ENCODE measurements at regions of chr6 and their contacts with region 1.

Region 1: DNA sequence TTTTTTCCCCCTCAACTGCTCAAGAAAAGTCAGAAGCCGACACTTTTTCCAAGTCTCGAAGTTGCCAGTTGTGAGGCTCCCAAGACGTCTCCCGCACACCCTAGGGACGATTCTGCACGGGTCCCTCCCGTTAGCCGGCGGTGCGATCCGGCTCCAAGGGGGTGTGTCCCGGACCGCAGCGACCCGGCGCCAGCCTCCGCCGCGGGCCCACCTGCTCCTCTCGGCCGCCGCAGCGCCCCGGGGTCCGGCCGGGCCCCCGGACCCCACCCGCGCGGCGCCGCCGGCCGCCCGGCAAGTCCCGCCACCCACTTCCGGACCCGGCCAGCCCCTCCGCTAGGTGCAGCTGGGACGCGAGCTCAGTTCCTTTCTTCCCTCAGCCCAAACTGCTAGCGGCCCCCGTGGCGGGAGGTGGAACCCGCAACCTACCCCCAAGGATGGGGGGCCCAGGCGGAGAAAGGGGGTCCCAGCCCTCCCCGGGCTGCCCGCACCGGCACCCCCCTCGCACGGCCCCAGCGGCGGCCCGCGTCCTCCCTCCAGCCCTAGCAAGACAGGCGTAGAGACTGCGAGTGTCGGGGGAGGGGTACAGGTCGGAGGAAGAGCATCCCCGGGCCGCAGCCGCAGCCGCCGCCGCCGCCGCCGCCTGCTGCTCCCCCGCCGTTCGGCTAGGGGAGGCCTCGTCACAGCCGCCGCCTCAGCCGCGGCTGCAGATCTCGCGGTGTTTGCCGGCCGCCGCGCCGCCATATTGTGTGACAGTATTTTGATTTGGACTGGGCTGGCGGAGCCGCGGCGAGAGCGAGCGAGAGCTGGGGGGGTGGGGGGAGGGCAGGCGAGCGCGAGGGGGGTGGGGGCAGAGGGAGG is 485 bp upstream of the TAB2 start:
- DNase-seq: peak; percentile 92
- ATAC-seq: peak; percentile 74
- H3K4me3 Mint-ChIP-seq: peak overlapping the region; percentile 83
- H3K27ac Mint-ChIP-seq: peak overlapping the region; percentile 86
- H3K4me1 Mint-ChIP-seq: peaks cover 24% of the 10 kb centered on the region
- H3K27me3 Mint-ChIP-seq: no peaks in the 10 kb centered on the region

Region 2: GRCh38 chr6:149094156-149094555 is 222.9 kb before region 1 on chr6:
- POLR2A ChIA-PET with region 1: interaction called, 31 read pairs
- DNase-seq: no peak
- ATAC-seq: no peak
- H3K4me3 Mint-ChIP-seq: peak overlapping the region; percentile 64
- H3K27ac Mint-ChIP-seq: peak overlapping the region; percentile 86
- H3K4me1 Mint-ChIP-seq: peaks cover 63% of the 10 kb centered on the region
- H3K27me3 Mint-ChIP-seq: no peaks in the 10 kb centered on the region

Region 3: DNA sequence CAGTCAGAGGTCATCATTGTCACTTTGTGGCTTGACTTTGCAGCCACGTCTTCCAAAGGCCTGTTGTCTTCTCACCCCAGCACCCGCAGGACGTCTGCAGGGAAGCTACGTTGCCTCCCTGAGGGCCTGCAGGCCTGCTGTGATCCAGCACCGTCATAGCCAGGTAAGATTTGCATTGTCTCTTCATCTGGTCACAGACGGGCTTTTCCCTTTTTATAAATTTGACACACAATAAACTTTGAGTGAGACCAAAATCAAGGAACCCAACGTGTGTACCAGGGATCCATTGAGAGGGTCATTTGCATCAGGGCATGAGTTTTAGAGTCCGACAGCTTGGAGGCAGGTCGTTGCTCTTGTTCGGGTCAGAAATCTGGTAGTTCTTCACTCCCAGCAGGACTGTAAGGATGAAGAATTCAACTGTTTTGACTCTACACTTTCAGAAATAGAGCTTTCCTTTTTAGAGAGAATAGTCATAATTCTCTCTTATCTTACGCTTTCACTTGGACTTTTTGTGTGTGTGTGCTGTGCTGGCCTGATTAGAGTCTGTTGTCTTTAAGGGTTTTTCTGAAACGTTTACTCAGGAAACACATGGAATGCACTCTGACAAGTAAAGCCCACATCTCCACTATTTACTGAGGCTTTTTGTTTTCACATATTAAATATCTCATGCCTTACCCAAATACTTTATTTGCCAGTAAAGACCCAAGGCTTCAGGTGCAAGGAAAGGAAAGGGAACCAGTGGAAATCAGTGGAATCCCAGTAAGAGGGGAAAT is 176.7 kb before region 1 on chr6:
- POLR2A ChIA-PET with region 1: interaction called, 13 read pairs
- DNase-seq: peak; percentile 57
- ATAC-seq: peak; percentile 65
- H3K4me3 Mint-ChIP-seq: peak overlapping the region; percentile 86
- H3K27ac Mint-ChIP-seq: peak overlapping the region; percentile 99
- H3K4me1 Mint-ChIP-seq: peaks cover 36% of the 10 kb centered on the region
- H3K27me3 Mint-ChIP-seq: no peaks in the 10 kb centered on the region

Region 4: DNA sequence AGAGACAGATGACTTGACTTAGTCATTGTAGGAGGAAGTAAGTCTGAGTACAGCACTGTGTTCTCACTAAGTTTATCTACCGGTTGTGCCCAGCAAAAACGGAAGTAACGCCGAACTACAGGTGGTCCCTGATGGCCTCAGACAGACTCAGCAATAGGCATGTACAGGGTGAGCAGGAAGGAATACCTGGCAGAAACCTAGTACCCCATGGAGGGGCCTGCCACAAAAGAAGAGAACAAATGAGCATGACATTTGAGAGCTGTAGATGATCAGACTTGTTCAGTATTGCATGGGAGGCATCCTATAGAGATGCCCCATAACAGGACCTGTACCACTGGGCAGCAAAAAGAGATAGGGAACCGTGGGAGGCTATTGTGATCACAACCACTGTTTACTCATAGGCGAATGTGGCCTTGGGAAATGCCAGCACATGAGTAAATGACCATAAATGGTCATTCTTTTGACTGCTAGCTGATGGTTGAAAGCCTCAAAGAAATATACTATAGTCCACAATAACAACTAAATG is 105.9 kb before region 1 on chr6:
- POLR2A ChIA-PET with region 1: interaction called, 10 read pairs
- DNase-seq: peak; percentile 35
- ATAC-seq: peak; percentile 75
- H3K4me3 Mint-ChIP-seq: peak overlapping the region; percentile 62
- H3K27ac Mint-ChIP-seq: peak overlapping the region; percentile 81
- H3K4me1 Mint-ChIP-seq: peaks cover 26% of the 10 kb centered on the region
- H3K27me3 Mint-ChIP-seq: no peaks in the 10 kb centered on the region

Region 5: DNA sequence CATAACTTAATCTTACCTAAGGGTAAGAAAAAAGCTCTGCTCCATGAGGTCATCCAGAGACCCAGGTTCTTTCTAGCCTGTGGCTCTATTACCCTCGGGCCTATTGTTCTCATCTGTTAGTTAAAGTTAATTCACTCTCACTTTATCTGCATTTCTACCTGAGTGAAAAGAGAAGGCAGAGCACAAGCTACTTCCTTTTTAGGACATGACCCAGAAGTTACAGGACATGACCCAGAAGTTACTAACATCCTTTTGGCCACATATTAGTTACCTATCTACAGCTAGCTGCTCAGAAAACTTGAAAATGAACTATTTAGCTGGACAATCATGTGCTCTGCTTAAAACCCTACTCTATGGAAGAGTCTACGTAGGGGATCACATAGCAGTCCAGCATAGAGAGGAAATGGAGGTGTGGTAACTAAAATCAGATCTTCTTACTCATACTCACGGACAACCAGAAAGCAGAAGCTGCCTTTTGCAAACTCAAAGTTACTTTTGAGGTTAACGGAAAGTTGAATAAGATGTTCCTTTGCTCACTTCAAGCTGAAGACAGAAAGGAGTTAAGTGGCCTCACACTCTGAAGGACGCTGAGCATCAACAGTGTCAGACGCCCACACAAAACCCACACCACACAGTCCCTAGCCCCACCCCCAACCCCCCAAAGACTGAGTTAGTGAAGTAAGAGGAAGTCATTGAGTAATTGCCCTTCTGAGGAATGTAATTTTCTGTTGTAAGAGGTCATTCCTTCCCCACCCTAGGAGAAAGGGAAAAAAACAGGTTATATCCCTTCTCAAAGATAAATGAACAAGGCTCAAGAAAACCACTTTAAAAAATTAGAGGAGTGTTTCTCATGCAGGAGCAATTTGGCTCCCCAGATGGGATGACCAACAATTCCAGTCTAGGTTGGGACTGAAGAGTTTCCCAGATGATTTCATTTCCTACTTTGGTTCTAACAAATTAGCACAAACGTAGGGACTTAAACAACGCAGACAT is 45.4 kb before region 1 on chr6:
- POLR2A ChIA-PET with region 1: interaction called, 14 read pairs
- DNase-seq: no peak
- ATAC-seq: peak; percentile 84
- H3K4me3 Mint-ChIP-seq: peak overlapping the region; percentile 78
- H3K27ac Mint-ChIP-seq: peak overlapping the region; percentile 93
- H3K4me1 Mint-ChIP-seq: peaks cover 38% of the 10 kb centered on the region
- H3K27me3 Mint-ChIP-seq: no peaks in the 10 kb centered on the region

Measured in activated naive CD8-positive, alpha-beta T cell treated with anti-CD3 and anti-CD28 coated beads, Interleukin-2, amount 10 ng/mL, durations not matched to agents 7 days and 5 days (primary cell).